Activated CD8-positive, alpha-beta T cell treated with anti-CD3 and anti-CD28 coated beads for 36 hours (primary cell): ENCODE measurements at regions of chr17 and their contacts with region 1.

Region 1: GRCh38 chr17:82120148-82120547 is 22.1 kb upstream of the FASN start:
- DNase-seq: peak; percentile 69
- ATAC-seq: peak; percentile 80
- H3K4me3 Mint-ChIP-seq: peak overlapping the region; percentile 42
- H3K27ac Mint-ChIP-seq: peak overlapping the region; percentile 84
- H3K4me1 Mint-ChIP-seq: peaks cover 50% of the 10 kb centered on the region
- H3K27me3 Mint-ChIP-seq: no peaks in the 10 kb centered on the region
- CTCF ChIP-seq: no peak

Region 2: GRCh38 chr17:82051776-82052637 is 68.1 kb before region 1 on chr17 and contains the starts of genes GPS1 and RFNG:
- CTCF ChIA-PET with region 1: no interaction called
- POLR2A ChIA-PET with region 1: no interaction called
- intact Hi-C with region 1: no loop called
- DNase-seq: peak; percentile 89
- ATAC-seq: peak; percentile 92
- H3K4me3 Mint-ChIP-seq: peak within 1 kb of the TSS; percentile 82
- H3K27ac Mint-ChIP-seq: peak within 1 kb of the TSS; percentile 75
- H3K4me1 Mint-ChIP-seq: peaks cover 21% of the 10 kb centered on the region
- H3K27me3 Mint-ChIP-seq: no peaks in the 10 kb centered on the region
- CTCF ChIP-seq: no peak
- total RNA-seq, gene GPS1: 82.7 to 88.6 TPM
- total RNA-seq, gene RFNG: 14.2 to 15.3 TPM

Region 3: GRCh38 chr17:82098072-82098821 is 21.9 kb before region 1 on chr17 and contains the start of gene FASN:
- CTCF ChIA-PET with region 1: no interaction called
- POLR2A ChIA-PET with region 1: interaction called, 10 read pairs
- intact Hi-C with region 1: no loop called
- DNase-seq: peak; percentile 95
- ATAC-seq: peak; percentile 82
- H3K4me3 Mint-ChIP-seq: peak within 1 kb of the TSS; percentile 80
- H3K27ac Mint-ChIP-seq: peak within 1 kb of the TSS; percentile 20
- H3K4me1 Mint-ChIP-seq: peaks cover 16% of the 10 kb centered on the region
- H3K27me3 Mint-ChIP-seq: no peaks in the 10 kb centered on the region
- CTCF ChIP-seq: peak; percentile 26
- total RNA-seq, gene FASN: 250 to 260 TPM

Region 4: DNA sequence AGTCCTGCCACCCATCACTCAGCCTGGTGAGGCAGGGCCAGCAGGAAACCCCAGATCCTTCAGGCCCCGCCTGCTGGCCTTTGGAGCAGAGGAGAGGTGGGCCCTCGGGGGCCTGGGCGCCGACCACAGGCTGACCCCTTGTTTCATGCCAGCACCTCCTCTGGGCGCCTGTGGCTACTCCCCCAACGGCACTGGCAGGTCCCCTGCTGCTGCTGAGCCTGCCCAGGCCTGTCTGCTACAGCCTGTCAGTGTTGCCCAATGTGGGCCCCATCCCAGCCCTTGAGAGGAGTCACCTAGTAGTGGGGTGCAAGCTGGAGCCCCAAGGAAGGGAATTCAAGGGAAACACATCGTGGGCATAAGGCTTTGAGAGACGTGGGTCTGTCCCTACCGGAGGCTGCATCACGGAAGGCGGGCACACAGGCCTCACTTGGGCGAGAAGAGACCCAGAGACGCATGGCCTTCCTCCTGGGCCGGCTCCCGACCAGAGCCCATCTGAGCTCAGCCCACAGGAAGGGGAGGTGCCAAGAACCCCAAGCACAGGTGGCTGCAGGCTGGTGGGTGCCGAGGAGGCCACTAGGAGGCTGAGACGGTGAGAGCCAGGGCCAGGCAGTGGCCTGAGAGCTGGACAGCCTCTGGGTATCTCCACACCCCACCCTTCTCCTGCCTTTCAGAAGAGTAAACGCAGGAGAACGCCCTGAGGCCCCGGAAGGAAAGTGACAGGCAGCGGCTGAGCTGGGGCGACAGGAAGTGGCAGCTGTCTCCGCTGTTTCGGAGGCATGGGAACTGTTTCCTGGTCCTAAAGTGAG is 14.1 kb before region 1 on chr17:
- CTCF ChIA-PET with region 1: interaction called, 12 read pairs
- POLR2A ChIA-PET with region 1: interaction called, 5 read pairs
- intact Hi-C with region 1: no loop called
- DNase-seq: peak; percentile 80
- ATAC-seq: peak; percentile 89
- H3K4me3 Mint-ChIP-seq: peak overlapping the region; percentile 90
- H3K27ac Mint-ChIP-seq: peak overlapping the region; percentile 95
- H3K4me1 Mint-ChIP-seq: peaks cover 27% of the 10 kb centered on the region
- H3K27me3 Mint-ChIP-seq: no peaks in the 10 kb centered on the region
- CTCF ChIP-seq: peak; percentile 50

Region 5: GRCh38 chr17:82145550-82146190 is 25.5 kb after region 1 on chr17:
- CTCF ChIA-PET with region 1: no interaction called
- POLR2A ChIA-PET with region 1: no interaction called
- intact Hi-C with region 1: no loop called
- DNase-seq: no peak
- ATAC-seq: no peak
- H3K4me3 Mint-ChIP-seq: no peak overlapping the region
- H3K27ac Mint-ChIP-seq: no peak overlapping the region
- H3K4me1 Mint-ChIP-seq: no peaks in the 10 kb centered on the region
- H3K27me3 Mint-ChIP-seq: no peaks in the 10 kb centered on the region
- CTCF ChIP-seq: no peak

Region 6: DNA sequence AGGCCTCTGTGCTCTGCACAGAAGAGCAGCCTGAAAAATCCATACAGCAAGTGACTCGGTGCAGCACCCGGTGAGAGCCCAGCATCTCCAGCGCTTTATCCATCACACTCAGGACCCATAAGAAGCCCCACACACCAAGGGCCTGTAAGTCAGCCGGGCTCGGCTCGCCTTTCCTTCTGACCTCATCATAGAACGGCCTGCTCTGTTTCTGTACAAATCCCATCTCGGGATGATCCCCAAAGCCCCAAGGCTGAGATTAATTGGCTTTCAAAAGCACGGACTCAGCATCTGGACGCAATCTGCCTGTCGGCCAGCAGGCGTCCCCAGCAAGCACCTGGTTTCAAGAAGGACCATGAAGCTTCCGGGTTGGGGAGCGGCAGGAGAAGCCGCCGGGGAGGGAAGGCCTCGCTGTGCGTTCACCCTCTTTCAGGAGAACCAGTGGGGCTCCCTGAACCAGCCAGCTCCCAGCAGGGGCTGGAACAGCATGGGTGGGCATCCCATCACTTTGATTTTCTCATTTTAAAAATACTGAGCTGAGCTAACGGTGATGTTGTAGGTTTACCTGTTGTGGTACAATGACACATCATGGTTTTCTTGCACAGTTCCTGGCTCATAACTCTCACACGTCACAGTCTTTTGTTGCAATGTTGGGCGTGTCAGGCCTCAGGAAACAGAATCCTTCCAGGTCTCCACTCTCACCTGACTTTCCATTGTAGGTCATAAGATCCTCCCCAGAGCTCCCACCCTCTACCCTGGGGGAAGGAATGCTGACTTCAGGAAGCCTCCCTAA is 85.8 kb after region 1 on chr17:
- CTCF ChIA-PET with region 1: no interaction called
- POLR2A ChIA-PET with region 1: no interaction called
- intact Hi-C with region 1: no loop called
- DNase-seq: peak; percentile 90
- ATAC-seq: peak; percentile 73
- H3K4me3 Mint-ChIP-seq: peak overlapping the region; percentile 66
- H3K27ac Mint-ChIP-seq: peak overlapping the region; percentile 94
- H3K4me1 Mint-ChIP-seq: peaks cover 58% of the 10 kb centered on the region
- H3K27me3 Mint-ChIP-seq: no peaks in the 10 kb centered on the region
- CTCF ChIP-seq: peak; percentile 96

Region 7: DNA sequence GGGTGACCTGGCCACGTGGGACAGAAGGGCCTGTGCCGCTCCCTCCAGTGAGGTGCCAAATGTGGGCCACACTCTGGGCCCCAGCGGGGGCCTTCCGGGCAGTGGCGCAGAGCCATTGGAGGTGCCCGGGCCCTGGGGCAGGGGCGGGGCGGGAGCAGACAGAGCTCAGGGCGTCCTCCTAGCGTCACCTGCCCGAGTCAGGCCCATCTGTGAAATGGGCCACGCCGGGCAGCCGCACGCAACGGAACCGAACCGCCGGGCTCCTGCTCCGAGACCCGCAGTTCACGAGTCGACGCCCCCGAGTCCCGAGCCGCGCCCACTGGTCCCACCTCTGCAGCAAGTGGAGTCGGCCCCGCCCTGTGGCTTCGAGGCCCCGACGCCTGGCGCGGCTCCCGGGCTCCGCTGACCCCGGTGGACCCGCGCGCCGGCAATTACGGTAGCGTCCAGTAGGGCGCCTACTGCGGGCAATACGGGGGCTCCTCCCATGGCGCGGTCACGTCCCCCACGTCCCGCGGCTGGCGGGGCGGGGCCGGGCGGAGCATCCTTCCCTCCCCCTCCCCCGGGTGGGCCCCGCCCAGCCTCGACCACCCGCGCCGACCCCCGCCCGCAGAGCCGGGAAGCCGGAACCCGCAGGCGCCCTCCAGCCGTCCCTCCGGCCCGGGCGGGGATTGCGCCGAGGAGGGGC is 110.6 kb after region 1 on chr17:
- CTCF ChIA-PET with region 1: no interaction called
- POLR2A ChIA-PET with region 1: no interaction called
- intact Hi-C with region 1: no loop called
- DNase-seq: peak; percentile 83
- ATAC-seq: peak; percentile 64
- H3K4me3 Mint-ChIP-seq: peak overlapping the region; percentile 92
- H3K27ac Mint-ChIP-seq: no peak overlapping the region
- H3K4me1 Mint-ChIP-seq: peaks cover 9% of the 10 kb centered on the region
- H3K27me3 Mint-ChIP-seq: no peaks in the 10 kb centered on the region
- CTCF ChIP-seq: peak; percentile 71